Motor neuron (in vitro differentiated cells): ENCODE measurements at regions of chr4 and their contacts with region 1.

Region 1: DNA sequence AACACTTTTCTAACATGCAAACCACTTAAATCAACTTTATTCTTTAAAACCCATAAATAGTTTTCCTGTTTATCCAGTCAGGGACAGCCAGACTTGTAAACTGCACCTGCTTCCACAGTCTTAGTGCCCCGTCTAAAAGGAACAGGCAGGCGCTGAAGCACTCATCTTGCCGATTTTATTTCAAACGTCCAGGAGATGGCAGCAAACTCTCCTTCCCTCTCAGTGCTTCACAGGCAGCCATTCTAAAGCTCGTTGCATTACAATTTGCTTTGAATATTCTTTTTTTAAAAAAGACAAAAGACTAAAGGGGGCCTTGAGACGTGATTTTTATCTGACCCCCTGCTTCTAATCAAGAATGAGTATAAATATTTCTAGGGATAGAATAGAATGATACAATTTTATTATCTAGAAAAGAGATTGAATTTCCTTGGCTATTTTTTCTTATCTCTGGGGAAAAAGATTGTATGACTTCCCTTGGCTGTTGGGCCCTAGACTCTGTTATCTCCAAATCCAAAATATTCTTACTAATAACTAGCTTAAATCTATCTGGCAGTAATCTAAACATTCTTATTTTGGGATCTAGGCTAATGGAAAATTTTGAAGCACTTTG is 93.6 kb upstream of the MYOZ2 start:
- ATAC-seq: peak; percentile 82 to 96 (median 88)
- H3K4me3 ChIP-seq: no peak overlapping the region
- H3K27ac ChIP-seq: no peak overlapping the region
- H3K4me1 ChIP-seq: no peaks in the 10 kb centered on the region

Region 2: GRCh38 chr4:118154649-118155048 is 887.4 kb before region 1 on chr4:
- in situ Hi-C with region 1: no loop called
- ATAC-seq: no peak
- H3K4me3 ChIP-seq: no peak overlapping the region
- H3K27ac ChIP-seq: no peak overlapping the region
- H3K4me1 ChIP-seq: no peaks in the 10 kb centered on the region

Region 3: GRCh38 chr4:118834960-118835569 is 207.0 kb before region 1 on chr4:
- in situ Hi-C with region 1: no loop called
- ATAC-seq: peak; percentile 40 to 84 (median 74)
- H3K4me3 ChIP-seq: peak overlapping the region; percentile 72 to 80 (median 79)
- H3K27ac ChIP-seq: peak overlapping the region; percentile 83 to 92
- H3K4me1 ChIP-seq: peaks cover 0 to 6% of the 10 kb centered on the region in 2 donors

Region 4: GRCh38 chr4:119212234-119212963 is 170.3 kb after region 1 on chr4 and contains the start of gene USP53:
- in situ Hi-C with region 1: loop called in 2 of 9 experiments (anchors 10 to 25 kb)
- ATAC-seq: peak; percentile 82 to 97 (median 94)
- H3K4me3 ChIP-seq: peak within 1 kb of the TSS; percentile 53 to 75 (median 67)
- H3K27ac ChIP-seq: peak within 1 kb of the TSS; percentile 21 to 83
- H3K4me1 ChIP-seq: no peaks in the 10 kb centered on the region
- total RNA-seq, gene USP53: 4.4 to 21.4 (median 12.6) TPM

Region 5: GRCh38 chr4:119286377-119287002 is 244.4 kb after region 1 on chr4:
- in situ Hi-C with region 1: loop called in 2 of 9 experiments (anchors 25 kb)
- ATAC-seq: peak in 1 of 8 experiments; percentile 19
- H3K4me3 ChIP-seq: no peak overlapping the region
- H3K27ac ChIP-seq: no peak overlapping the region
- H3K4me1 ChIP-seq: peaks cover 0 to 3% of the 10 kb centered on the region in 2 donors

Region 6: GRCh38 chr4:119490335-119490734 is 448.3 kb after region 1 on chr4:
- in situ Hi-C with region 1: loop called in 1 of 9 experiments (anchors 25 kb)
- ATAC-seq: peak in 2 of 8 experiments; percentile 39 to 41
- H3K4me3 ChIP-seq: no peak overlapping the region
- H3K27ac ChIP-seq: no peak overlapping the region
- H3K4me1 ChIP-seq: no peaks in the 10 kb centered on the region